ENCODE measurements at regions of chr18 and their contacts with region 1.

Region 1: GRCh38 chr18:42298759-42299675 is 344.0 kb downstream of the PIK3C3 start:
- ATAC-seq: peak; percentile 84 to 96 (median 92)
- H3K4me3 ChIP-seq: no peak overlapping the region
- H3K27ac ChIP-seq: no peak overlapping the region
- H3K4me1 ChIP-seq: peaks cover 9 to 17% of the 10 kb centered on the region in 2 donors

Region 2: DNA sequence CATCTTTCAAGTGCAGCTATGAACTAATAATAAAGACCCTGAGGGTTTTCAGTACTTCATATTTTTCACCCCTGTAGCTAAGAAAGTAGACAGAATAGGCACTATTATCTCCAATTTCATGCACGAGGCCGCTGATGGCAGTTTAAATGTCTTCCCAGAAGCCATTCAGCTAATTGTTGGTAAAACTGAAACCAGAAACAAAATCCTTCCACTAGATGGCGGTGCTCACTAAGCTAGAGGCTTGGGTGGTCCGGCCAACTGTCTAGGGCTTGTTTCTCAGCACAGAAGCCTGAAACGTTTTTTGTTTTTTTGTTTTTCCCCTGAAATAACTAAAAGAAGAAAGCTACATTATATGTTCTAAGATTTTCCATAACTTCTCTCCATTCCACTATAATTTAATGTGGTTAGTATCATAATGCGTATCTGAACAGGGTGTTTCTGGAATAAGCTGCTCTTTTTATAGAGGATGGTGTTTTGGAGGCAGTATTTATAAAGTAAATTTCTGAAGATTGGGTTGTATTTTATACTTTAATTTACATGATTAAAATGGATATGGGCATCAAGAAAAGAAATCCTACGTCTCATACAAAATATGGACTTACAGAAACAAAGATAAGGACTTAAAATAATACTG is 184.6 kb before region 1 on chr18:
- in situ Hi-C with region 1: loop called in 1 of 9 experiments (anchors 25 kb)
- ATAC-seq: peak; percentile 83 to 96 (median 92)
- H3K4me3 ChIP-seq: no peak overlapping the region
- H3K27ac ChIP-seq: peak overlapping the region; percentile 54 to 66
- H3K4me1 ChIP-seq: peaks cover 6 to 31% of the 10 kb centered on the region in 2 donors

Region 3: GRCh38 chr18:43271593-43272432 is 972.8 kb after region 1 on chr18:
- in situ Hi-C with region 1: loop called in 3 of 9 experiments (anchors 10 to 25 kb)
- ATAC-seq: peak in 1 of 8 experiments; percentile 38
- H3K4me3 ChIP-seq: peak overlapping the region in 3 of 5 donors; percentile 1 to 22 (median 14)
- H3K27ac ChIP-seq: no peak overlapping the region
- H3K4me1 ChIP-seq: peaks cover 0 to 24% of the 10 kb centered on the region in 2 donors

Region 4: DNA sequence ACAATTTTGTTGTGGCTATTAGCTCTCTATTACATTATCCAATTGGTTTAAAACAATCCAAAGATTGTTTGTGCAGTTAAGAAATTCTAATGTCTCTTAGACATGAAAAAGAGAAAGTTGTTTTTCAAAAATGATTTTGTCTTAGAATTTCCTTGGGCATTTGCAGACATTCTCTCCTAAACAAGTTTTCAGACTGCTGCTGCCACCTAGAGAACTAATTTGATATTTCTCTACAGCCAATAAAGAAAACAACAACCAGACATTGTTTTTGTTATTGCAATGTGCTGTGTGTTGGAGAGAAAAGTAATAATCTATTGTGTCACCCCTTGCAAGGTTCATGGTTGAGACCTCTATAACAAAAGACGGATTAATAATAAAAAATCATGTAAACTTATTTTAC is 1097.2 kb after region 1 on chr18:
- in situ Hi-C with region 1: loop called in 1 of 9 experiments (anchors 25 kb)
- ATAC-seq: peak in 5 of 8 experiments; percentile 33 to 49 (median 43)
- H3K4me3 ChIP-seq: no peak overlapping the region
- H3K27ac ChIP-seq: no peak overlapping the region
- H3K4me1 ChIP-seq: peaks cover 0 to 3% of the 10 kb centered on the region in 2 donors